GM12878 (cell line): ENCODE measurements at regions of chr3 and their contacts with region 1.

Region 1: DNA sequence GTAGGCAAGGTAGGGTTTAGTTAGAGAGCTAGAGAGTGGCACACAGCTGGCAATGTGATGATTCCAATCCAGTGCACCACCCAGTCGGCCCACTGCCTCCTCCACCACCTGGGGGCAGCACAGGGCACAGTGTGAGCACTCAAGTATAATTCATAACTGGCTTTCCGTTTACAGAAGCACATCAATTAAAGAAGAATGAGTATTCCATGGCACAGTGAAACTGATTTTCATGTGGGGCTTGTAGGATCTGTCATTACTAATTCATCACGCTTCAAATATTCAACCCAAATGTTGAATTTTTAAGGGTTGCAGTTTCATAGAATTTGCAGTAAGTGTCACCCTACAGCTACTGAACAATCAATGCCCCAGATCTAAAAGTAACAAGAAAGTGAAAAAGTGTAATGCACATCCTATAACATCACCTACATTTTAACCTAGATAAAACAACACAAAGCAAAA is 149.9 kb downstream of the IGSF11 start:
- DNase-seq: no peak
- ATAC-seq: peak; percentile 92
- H3K4me3 ChIP-seq: no peak overlapping the region
- H3K27ac ChIP-seq: no peak overlapping the region
- H3K4me1 ChIP-seq: no peaks in the 10 kb centered on the region
- H3K27me3 ChIP-seq: no peaks in the 10 kb centered on the region
- CTCF ChIP-seq: peak; percentile 74 to 91 (median 88)
- EP300 ChIP-seq: no peak
- POLR2A ChIP-seq: no peak
- RAD21 ChIP-seq: peak; percentile 57

Region 2: DNA sequence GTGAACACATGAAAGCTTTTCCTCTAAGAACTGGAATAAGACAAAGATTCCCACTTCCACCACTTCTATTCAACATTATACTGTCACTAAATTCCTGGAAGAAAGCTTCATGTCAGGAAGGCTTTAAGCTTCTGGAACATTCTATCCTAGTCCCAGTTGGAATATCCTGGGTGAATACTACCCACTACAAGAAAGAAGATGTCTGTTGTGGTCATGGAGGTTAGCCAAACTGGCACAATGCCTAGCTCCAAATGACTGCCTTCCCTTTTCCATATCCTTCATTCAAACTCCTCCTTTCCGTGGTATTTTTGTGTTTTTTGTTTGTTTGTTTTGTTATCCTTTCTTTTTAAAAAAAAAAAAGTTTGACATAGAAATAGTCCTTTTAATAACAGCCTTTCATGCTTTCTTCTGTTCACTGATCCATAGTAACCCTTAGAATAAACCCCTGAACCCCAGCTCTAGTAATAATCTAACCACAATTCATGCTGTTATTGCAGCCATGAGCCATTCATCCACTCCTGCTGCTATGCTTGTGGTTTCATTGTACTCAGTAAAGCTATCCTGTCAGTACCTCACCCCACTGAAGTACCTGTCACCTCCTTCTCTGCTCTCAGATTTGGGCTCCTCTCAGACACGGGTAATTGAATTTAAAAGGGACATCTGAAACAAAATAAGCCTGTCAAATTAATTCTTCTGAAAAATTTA is 297.6 kb before region 1 on chr3:
- CTCF ChIA-PET with region 1: no interaction called
- POLR2A ChIA-PET with region 1: no interaction called
- RAD21 ChIA-PET with region 1: no interaction called
- SMC1A ChIA-PET with region 1: no interaction called
- in situ Hi-C with region 1: no loop called
- intact Hi-C with region 1: no loop called
- DNase-seq: no peak
- ATAC-seq: peak; percentile 49
- H3K4me3 ChIP-seq: no peak overlapping the region
- H3K27ac ChIP-seq: no peak overlapping the region
- H3K4me1 ChIP-seq: no peaks in the 10 kb centered on the region
- H3K27me3 ChIP-seq: no peaks in the 10 kb centered on the region
- CTCF ChIP-seq: no peak
- EP300 ChIP-seq: no peak
- POLR2A ChIP-seq: no peak
- RAD21 ChIP-seq: no peak

Region 3: GRCh38 chr3:118729546-118729945 is 155.2 kb before region 1 on chr3:
- CTCF ChIA-PET with region 1: no interaction called
- POLR2A ChIA-PET with region 1: no interaction called
- RAD21 ChIA-PET with region 1: no interaction called
- SMC1A ChIA-PET with region 1: no interaction called
- in situ Hi-C with region 1: no loop called
- intact Hi-C with region 1: no loop called
- DNase-seq: no peak
- ATAC-seq: no peak
- H3K4me3 ChIP-seq: no peak overlapping the region
- H3K27ac ChIP-seq: no peak overlapping the region
- H3K4me1 ChIP-seq: no peaks in the 10 kb centered on the region
- H3K27me3 ChIP-seq: no peaks in the 10 kb centered on the region
- CTCF ChIP-seq: no peak
- EP300 ChIP-seq: no peak
- POLR2A ChIP-seq: no peak
- RAD21 ChIP-seq: no peak; the same call in 1 of the 2 replicates

Region 4: GRCh38 chr3:118907909-118908308 is 23.1 kb after region 1 on chr3:
- CTCF ChIA-PET with region 1: interaction called, 19 read pairs
- POLR2A ChIA-PET with region 1: no interaction called
- RAD21 ChIA-PET with region 1: interaction called, 4 read pairs
- SMC1A ChIA-PET with region 1: no interaction called
- in situ Hi-C with region 1: no loop called
- intact Hi-C with region 1: no loop called
- DNase-seq: no peak
- ATAC-seq: no peak
- H3K4me3 ChIP-seq: no peak overlapping the region
- H3K27ac ChIP-seq: no peak overlapping the region
- H3K4me1 ChIP-seq: no peaks in the 10 kb centered on the region
- H3K27me3 ChIP-seq: peaks cover 0 to 2% of the 10 kb centered on the region in 2 experiments; a peak in 1 of 4 replicates
- CTCF ChIP-seq: no peak
- EP300 ChIP-seq: no peak
- POLR2A ChIP-seq: no peak
- RAD21 ChIP-seq: no peak

Region 5: DNA sequence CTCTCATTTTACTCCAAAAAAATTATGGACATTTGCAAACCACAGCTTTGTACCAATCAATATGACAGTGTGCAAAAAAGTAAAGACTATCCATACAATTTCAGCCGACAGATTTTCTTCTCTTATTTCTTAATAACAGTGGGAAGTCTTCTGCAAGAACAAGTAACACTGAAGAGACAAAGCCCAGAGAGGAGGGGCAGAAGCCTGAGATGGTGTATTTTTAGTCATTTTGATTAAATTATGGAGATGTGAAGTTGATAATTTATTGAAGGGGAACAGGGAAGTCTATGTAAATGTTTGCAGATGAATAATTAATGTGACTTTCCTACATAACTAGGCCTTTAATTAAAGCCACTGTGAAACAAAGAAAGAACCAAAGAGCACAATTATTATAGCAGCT is 195.6 kb after region 1 on chr3:
- CTCF ChIA-PET with region 1: interaction called, 10 read pairs
- POLR2A ChIA-PET with region 1: no interaction called
- RAD21 ChIA-PET with region 1: no interaction called
- SMC1A ChIA-PET with region 1: no interaction called
- in situ Hi-C with region 1: no loop called
- intact Hi-C with region 1: no loop called
- DNase-seq: no peak
- ATAC-seq: no peak
- H3K4me3 ChIP-seq: no peak overlapping the region
- H3K27ac ChIP-seq: no peak overlapping the region
- H3K4me1 ChIP-seq: no peaks in the 10 kb centered on the region
- H3K27me3 ChIP-seq: no peaks in the 10 kb centered on the region; a peak in 1 of 4 replicates
- CTCF ChIP-seq: no peak
- EP300 ChIP-seq: no peak
- POLR2A ChIP-seq: no peak
- RAD21 ChIP-seq: no peak

Region 6: DNA sequence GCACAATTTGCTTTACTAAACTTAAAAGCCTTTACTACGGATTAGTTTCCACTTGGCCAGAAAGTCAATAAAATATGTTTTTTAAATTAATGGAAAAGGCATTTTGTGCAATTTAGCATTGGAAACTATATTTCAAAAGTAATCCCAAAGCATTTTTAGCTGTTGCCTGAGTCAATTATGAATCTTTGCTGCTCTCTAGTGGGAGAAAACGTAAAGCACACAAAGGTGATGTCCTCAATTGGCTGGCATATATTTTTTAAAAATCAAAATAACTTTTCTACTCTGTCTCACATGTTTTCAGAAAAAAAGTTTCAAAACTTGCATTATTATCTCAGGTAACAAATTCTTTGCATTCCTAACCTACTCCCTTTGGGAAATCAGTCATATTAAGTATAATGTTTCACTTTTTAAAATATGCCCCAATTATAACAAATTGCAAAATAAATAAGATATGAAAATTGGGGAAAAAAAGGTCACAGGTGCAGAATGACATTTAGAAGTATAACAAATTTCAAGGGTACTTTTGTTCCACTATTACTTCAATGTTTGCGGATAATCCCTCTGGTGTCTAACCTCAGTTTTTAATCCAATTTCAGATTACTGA is 213.9 kb after region 1 on chr3:
- CTCF ChIA-PET with region 1: interaction called, 221 read pairs
- POLR2A ChIA-PET with region 1: no interaction called
- RAD21 ChIA-PET with region 1: interaction called, 84 read pairs
- SMC1A ChIA-PET with region 1: interaction called, 88 read pairs
- in situ Hi-C with region 1: loop called (anchors 5 kb)
- intact Hi-C with region 1: loop called (anchors 1 kb)
- DNase-seq: no peak
- ATAC-seq: peak; percentile 70
- H3K4me3 ChIP-seq: no peak overlapping the region
- H3K27ac ChIP-seq: no peak overlapping the region
- H3K4me1 ChIP-seq: no peaks in the 10 kb centered on the region
- H3K27me3 ChIP-seq: peaks cover 0 to 2% of the 10 kb centered on the region in 2 experiments; a peak in 1 of 4 replicates
- CTCF ChIP-seq: peak; percentile 49 to 69 (median 62); a peak in 5 of 6 replicates
- EP300 ChIP-seq: no peak
- POLR2A ChIP-seq: no peak
- RAD21 ChIP-seq: peak; percentile 86

Region 7: GRCh38 chr3:119240591-119241434 is 356.0 kb after region 1 on chr3 and contains the start of gene B4GALT4:
- CTCF ChIA-PET with region 1: interaction called, 110 read pairs
- POLR2A ChIA-PET with region 1: no interaction called
- RAD21 ChIA-PET with region 1: interaction called, 54 read pairs
- SMC1A ChIA-PET with region 1: interaction called, 33 read pairs
- in situ Hi-C with region 1: loop called (anchors 10 kb)
- intact Hi-C with region 1: loop called (anchors 2 kb)
- DNase-seq: no peak
- ATAC-seq: peak; percentile 94
- H3K4me3 ChIP-seq: peak within 1 kb of the TSS; percentile 98
- H3K27ac ChIP-seq: peak within 1 kb of the TSS; percentile 88
- H3K4me1 ChIP-seq: peaks cover 4% of the 10 kb centered on the region; the same call in 1 of the 2 replicates
- H3K27me3 ChIP-seq: no peaks in the 10 kb centered on the region
- CTCF ChIP-seq: no peak
- EP300 ChIP-seq: no peak
- POLR2A ChIP-seq: peak; percentile 98
- RAD21 ChIP-seq: no peak
- polyA plus RNA-seq, gene B4GALT4: 13.8 to 15.4 TPM

Region 8: GRCh38 chr3:119443179-119443578 is 558.4 kb after region 1 on chr3:
- CTCF ChIA-PET with region 1: no interaction called
- POLR2A ChIA-PET with region 1: no interaction called
- RAD21 ChIA-PET with region 1: no interaction called
- SMC1A ChIA-PET with region 1: no interaction called
- in situ Hi-C with region 1: no loop called
- intact Hi-C with region 1: no loop called
- DNase-seq: no peak
- ATAC-seq: no peak
- H3K4me3 ChIP-seq: no peak overlapping the region
- H3K27ac ChIP-seq: no peak overlapping the region
- H3K4me1 ChIP-seq: no peaks in the 10 kb centered on the region
- H3K27me3 ChIP-seq: no peaks in the 10 kb centered on the region
- CTCF ChIP-seq: no peak
- EP300 ChIP-seq: no peak
- POLR2A ChIP-seq: no peak
- RAD21 ChIP-seq: no peak